AG04449 (cell line): ENCODE measurements at regions of chr4 and their contacts with region 1.

Region 1: GRCh38 chr4:26028793-26029567 is 115.0 kb downstream of the SMIM20 start:
- DNase-seq: no peak
- H3K4me3 ChIP-seq: no peak overlapping the region
- CTCF ChIP-seq: peak; percentile 98

Region 2: DNA sequence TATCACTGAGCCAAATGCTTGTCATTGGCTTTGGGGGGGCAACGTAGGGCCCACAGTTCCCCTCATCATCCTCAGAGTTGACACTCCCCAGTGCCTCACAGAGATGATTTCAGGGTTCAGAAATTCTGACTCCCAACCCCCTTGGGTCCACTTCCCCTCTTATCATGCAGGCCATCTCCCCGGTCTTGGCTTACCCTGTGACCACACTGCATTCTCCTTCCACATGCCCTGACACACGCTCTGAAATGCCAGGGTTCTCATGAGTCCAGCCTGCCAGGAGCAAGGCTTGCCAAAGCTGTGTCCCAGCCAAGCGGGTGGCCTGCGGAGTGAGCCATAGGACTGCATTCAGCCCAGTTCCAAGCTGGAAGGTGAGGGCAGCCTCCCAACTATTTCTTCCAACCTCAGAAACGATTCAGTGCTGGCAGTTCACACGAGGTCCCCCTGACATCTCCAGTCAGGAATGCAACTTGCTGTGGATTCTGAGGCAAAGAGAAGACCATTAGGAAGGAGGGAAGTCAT is 13.8 kb before region 1 on chr4:
- CTCF ChIA-PET with region 1: interaction called, 14 read pairs
- POLR2A ChIA-PET with region 1: interaction called, 4 read pairs
- DNase-seq: peak; percentile 97
- H3K4me3 ChIP-seq: no peak overlapping the region
- CTCF ChIP-seq: no peak

Region 3: DNA sequence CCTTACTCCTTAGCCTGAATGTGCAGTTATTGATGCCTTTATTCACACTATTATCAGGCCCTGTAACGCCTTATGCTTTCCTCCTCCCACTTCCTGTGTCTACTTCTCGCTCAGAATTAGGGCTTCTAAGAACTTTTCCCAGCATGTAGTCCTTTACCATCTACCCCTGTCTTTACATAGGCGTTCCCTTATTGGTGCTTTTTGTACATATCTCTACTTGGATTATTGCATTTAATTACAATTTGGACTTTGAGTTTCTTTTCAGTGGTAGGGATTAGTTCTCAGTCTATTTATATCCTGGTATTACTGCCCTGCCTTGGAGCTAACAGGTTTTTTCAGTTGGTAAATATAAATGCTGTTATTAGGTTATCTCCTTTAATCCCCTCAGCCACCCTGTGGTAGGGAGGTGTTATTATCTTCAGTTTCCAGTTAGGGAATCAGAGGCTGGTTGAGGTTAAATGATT is 375.8 kb after region 1 on chr4:
- CTCF ChIA-PET with region 1: interaction called, 35 read pairs
- POLR2A ChIA-PET with region 1: no interaction called
- DNase-seq: no peak
- H3K4me3 ChIP-seq: no peak overlapping the region
- CTCF ChIP-seq: no peak

Region 4: GRCh38 chr4:26434030-26434639 is 405.2 kb after region 1 on chr4:
- CTCF ChIA-PET with region 1: no interaction called
- POLR2A ChIA-PET with region 1: no interaction called
- DNase-seq: no peak
- H3K4me3 ChIP-seq: no peak overlapping the region
- CTCF ChIP-seq: no peak